Prostate gland (tissue), 2 donors: ENCODE measurements at regions of chr2 and their contacts with region 1.

Region 1: GRCh38 chr2:147904044-147904443 is 59.2 kb downstream of the ACVR2A start:
- DNase-seq: no peak
- H3K4me3 ChIP-seq: no peak overlapping the region
- H3K27ac ChIP-seq: no peak overlapping the region
- H3K4me1 ChIP-seq: no peaks in the 10 kb centered on the region
- H3K27me3 ChIP-seq: no peaks in the 10 kb centered on the region
- CTCF ChIP-seq: no peak
- POLR2A ChIP-seq: no peak

Region 2: GRCh38 chr2:147030966-147031720 is 872.9 kb before region 1 on chr2:
- intact Hi-C with region 1: loop called (anchors 10 kb)
- DNase-seq: peak; percentile 11
- H3K4me3 ChIP-seq: no peak overlapping the region
- H3K27ac ChIP-seq: peak overlapping the region in 1 of 2 donors; percentile 6
- H3K4me1 ChIP-seq: no peaks in the 10 kb centered on the region
- H3K27me3 ChIP-seq: no peaks in the 10 kb centered on the region
- CTCF ChIP-seq: no peak
- POLR2A ChIP-seq: no peak

Region 3: DNA sequence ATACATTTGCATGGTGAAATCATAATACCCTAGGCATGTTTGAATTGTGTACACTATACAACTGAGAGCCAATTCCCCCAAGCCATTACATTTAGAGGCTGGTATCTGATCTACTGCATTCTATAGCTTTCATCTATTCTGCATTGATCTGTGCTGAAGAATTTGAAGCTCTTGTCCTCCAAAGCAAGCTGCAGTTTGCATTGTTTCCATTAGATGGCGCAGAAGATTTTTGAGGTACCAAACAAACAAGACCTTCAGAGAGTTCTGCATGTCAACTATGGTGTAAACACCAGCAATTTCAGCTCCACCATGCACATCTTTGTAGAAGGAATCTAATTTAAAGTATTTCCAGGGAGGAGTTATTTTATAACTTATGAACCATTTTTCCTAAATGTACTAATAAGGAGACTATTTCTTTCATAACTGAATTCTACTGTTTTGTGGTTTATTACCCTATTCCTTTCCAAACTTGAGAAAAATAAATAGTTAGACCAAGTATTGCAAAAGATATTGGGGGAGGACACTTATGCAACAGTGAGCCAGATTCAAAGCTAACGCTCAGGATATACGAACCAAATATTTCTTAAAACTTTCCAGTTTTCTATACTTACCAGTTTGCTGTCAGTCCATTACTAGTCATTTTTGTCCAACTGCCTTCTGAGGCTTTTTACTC is 821.1 kb before region 1 on chr2:
- intact Hi-C with region 1: loop called (anchors 10 kb)
- DNase-seq: peak; percentile 45
- H3K4me3 ChIP-seq: no peak overlapping the region
- H3K27ac ChIP-seq: no peak overlapping the region
- H3K4me1 ChIP-seq: no peaks in the 10 kb centered on the region
- H3K27me3 ChIP-seq: no peaks in the 10 kb centered on the region
- CTCF ChIP-seq: peak; percentile 63 to 83 (median 76)
- POLR2A ChIP-seq: no peak

Region 4: DNA sequence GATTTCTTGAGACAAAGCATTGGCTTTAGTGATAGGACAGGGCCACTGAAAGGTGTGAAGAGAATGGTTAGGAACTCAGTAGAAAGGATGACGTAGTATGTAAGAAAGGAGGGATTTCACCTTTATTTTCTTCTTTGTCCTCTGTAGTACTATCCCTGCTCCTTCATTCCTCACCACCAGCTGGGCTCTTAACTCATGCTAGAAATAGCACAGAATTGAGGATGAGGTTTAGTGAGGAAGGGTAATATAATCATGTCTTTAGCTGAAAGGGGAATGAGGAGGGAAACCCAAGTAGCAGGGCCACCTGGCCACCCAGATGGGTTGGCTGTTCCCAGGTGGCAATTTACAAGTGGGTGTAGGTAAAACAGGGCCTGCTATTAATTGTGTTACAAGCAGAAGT is 44.0 kb before region 1 on chr2:
- intact Hi-C with region 1: no loop called
- DNase-seq: no peak
- H3K4me3 ChIP-seq: no peak overlapping the region
- H3K27ac ChIP-seq: no peak overlapping the region
- H3K4me1 ChIP-seq: no peaks in the 10 kb centered on the region
- H3K27me3 ChIP-seq: no peaks in the 10 kb centered on the region
- CTCF ChIP-seq: no peak
- POLR2A ChIP-seq: no peak